GM23248 (cell line): ENCODE measurements at regions of chr14 and their contacts with region 1.

Region 1: GRCh38 chr14:56491299-56492285 is 88.0 kb upstream of the TMEM260 start:
- DNase-seq: peak; percentile 61
- H3K4me3 ChIP-seq: no peak overlapping the region
- H3K27ac ChIP-seq: no peak overlapping the region
- H3K4me1 ChIP-seq: 0 out of 2 replicates have a peak, but pooled peaks cover 6% of the 10 kb centered on the region
- H3K27me3 ChIP-seq: peaks cover 12% of the 10 kb centered on the region; the same call in 1 of the 2 replicates

Region 2: DNA sequence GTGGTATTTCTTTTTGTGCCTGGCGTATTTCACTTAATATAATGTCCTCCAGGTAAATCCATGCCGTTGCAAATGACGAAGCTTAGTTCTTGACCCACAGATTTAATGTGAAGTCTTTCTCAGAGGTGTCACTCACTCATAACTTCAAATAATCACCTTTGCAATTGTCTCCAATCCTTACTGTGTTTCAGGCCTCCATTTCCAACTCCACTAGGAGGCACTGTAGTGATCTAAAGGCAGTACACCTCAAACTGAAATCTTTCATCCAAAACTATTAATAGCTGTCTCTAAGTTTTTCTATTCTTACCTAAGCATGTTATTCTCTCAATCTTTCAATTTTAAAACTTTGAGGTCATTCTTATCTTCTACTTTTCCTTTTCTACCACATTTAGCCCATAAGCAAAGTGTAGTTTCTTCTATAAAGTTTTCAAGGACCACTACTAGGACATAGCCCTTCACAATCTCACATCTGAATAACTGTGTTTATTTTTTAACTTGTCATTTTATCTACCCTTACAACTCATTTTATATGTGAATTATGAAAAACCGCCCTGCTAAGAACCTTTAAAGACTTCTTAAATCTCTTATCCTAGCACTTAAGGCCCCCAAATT is 1245.8 kb before region 1 on chr14:
- in situ Hi-C with region 1: loop called (anchors 25 kb)
- DNase-seq: peak; percentile 55
- H3K4me3 ChIP-seq: no peak overlapping the region
- H3K27ac ChIP-seq: no peak overlapping the region
- H3K4me1 ChIP-seq: no peaks in the 10 kb centered on the region
- H3K27me3 ChIP-seq: peaks cover 21% of the 10 kb centered on the region

Region 3: GRCh38 chr14:55446218-55446654 is 1045.4 kb before region 1 on chr14:
- in situ Hi-C with region 1: loop called (anchors 25 kb)
- DNase-seq: peak; percentile 93
- H3K4me3 ChIP-seq: peak overlapping the region; percentile 19
- H3K27ac ChIP-seq: peak overlapping the region; percentile 72
- H3K4me1 ChIP-seq: peaks cover 31% of the 10 kb centered on the region
- H3K27me3 ChIP-seq: no peaks in the 10 kb centered on the region

Region 4: DNA sequence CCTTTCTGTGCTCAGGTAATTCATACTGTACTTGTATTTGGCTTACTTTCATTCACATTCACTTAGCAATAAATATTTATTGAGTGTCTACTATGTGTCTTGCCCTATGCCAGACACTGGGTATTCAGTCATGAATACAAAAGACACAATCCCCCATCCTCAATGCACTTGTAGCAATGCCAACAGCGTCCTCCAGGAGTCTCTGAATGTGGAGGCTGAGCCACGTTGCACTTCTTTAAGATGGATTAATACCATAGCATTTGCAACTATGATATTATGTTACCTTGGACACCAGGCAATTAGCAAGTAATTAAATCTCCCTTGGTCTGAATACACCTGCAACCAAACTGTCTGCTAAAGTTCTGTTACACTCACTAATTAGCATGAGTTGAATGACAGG is 259.9 kb after region 1 on chr14:
- in situ Hi-C with region 1: no loop called
- DNase-seq: no peak
- H3K4me3 ChIP-seq: no peak overlapping the region
- H3K27ac ChIP-seq: no peak overlapping the region
- H3K4me1 ChIP-seq: no peaks in the 10 kb centered on the region
- H3K27me3 ChIP-seq: 0 out of 2 replicates have a peak, but pooled peaks cover 3% of the 10 kb centered on the region

Region 5: DNA sequence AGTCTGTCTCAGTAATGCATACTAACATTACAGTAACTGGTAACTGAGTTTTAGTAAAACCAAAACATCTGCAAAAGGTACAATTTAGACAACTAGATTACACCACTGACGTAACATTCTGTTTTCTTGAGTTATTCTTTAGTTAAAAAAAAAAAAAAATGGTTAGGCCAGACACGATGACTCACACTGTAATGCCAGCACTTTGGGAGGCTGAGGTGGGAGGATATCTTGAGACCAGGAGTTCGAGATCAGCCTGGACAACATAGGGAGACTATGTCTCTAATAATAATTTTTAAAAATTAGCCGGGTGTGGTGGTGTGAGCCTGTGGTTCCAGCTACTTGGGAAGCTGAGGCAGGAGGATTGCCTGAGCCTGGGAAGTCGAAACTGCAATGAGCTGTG is 811.3 kb after region 1 on chr14:
- in situ Hi-C with region 1: loop called (anchors 10 kb)
- DNase-seq: peak; percentile 10
- H3K4me3 ChIP-seq: no peak overlapping the region
- H3K27ac ChIP-seq: no peak overlapping the region
- H3K4me1 ChIP-seq: no peaks in the 10 kb centered on the region
- H3K27me3 ChIP-seq: peaks cover 6% of the 10 kb centered on the region; the same call in 1 of the 2 replicates